ENCODE measurements at regions of chr11 and their contacts with region 1.

Region 1: DNA sequence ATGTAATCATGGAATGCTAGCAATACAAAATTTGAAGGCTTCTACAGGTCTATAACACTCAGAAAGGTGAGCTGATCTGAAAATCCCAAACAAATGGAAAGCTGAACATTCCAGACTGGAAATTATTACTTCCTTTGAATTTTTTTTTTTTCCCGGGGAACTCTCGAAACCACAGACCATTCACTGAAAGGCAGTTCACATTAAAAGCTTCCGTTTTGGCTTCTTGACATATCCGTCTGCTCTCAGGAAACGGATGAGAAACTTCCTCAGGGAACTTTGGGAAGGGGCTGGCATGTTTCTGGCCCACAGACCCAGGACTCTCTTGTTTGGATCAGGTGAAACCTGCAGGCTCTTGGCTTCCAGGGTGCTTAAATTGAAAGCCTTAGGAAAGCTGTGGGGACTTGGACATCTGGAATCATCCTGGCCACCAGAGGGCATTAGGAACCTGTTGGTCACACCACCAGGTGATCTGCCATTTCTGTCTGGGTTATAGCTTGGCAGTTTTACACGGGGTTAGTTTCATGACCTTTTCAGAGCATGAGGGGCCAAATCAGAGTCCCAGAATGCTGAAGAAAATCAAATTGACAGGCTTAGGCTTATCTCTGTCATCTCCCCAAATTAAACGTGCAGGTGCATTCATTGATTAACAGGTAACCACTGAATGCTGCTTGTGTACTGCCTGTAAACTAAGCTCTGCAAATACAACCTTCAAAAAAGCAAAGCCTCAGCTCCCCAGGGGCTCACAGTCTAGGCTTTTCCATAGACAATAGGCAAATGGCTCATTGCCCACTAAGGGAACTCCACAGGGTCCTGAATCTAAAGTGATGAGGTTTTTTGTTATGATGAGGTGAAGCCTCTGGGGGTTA is 22.7 kb upstream of the GRAMD1B start:
- DNase-seq: no peak
- ATAC-seq: peak; percentile 51

Region 2: GRCh38 chr11:123301696-123302400 is 105.5 kb before region 1 on chr11:
- intact Hi-C with region 1: loop called (anchors 1 kb)
- DNase-seq: peak; percentile 82
- ATAC-seq: peak; percentile 84

Region 3: DNA sequence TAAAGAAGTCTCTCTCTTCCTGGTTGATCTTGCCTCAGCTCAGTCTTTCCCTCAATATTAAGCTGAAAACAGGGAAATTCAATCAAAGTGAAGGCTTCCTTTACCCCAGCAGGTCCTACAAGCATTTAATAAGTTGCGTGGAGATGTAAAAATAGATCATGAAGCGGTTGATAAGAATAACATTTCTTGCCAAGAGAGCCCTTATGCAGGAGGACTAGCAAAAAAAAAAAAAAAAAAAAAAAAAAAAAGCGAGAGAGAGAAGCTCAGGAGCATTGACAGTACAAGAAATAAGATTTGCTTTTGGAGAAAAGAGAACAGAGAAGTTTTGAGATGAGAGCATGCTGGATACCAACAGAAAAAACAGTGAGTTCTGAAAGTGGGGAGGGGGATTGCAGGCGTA is 100.1 kb before region 1 on chr11:
- intact Hi-C with region 1: loop called (anchors 1 kb)
- DNase-seq: no peak
- ATAC-seq: peak; percentile 4

Region 4: GRCh38 chr11:123314972-123315371 is 92.4 kb before region 1 on chr11:
- intact Hi-C with region 1: loop called (anchors 2 kb)
- DNase-seq: no peak
- ATAC-seq: peak; percentile 96

Region 5: DNA sequence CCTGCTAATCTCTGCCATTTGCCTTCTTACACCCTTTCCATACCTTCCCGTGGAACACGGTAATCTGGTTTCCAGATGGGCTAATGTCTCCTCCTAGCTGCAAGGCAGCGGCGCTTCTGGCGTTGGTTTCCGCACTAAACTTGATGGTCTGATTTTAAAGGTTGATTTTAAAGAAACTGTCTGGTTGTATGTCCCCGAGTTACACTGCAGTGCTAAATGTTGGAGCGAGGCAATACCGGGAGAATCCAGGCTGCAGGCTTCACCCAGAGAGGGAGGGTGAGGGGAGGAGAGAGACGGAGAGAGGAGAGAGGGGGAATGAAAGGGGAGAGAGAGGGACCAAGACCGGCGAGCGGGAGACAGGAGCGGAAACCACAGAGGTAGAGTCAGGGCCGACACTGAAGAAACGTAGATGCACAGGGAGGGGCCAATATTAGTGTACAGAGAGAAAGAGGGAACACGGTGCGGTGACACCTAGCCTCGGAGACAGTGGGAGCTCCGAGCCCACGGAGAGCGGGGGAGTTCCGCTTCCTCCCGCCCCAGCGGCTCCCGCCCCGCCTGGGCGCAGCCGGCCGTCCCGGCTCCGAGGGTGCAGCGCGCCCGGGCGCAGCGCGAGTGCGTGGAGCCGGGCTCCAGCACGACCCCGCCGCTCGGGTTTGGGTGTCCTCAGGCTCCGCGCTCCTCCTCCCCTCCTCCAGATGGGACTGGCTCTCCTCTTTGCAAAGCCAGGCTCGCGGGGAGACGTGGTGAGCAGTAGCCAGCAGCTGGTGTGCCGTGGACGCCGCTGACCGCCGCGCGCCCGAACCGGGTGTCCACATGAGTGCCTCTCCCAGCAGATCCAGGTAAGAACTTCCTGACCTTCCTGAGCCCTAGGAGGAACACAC is 49.2 kb before region 1 on chr11:
- intact Hi-C with region 1: loop called (anchors 1 kb)
- DNase-seq: peak; percentile 65
- ATAC-seq: peak; percentile 60

Region 6: DNA sequence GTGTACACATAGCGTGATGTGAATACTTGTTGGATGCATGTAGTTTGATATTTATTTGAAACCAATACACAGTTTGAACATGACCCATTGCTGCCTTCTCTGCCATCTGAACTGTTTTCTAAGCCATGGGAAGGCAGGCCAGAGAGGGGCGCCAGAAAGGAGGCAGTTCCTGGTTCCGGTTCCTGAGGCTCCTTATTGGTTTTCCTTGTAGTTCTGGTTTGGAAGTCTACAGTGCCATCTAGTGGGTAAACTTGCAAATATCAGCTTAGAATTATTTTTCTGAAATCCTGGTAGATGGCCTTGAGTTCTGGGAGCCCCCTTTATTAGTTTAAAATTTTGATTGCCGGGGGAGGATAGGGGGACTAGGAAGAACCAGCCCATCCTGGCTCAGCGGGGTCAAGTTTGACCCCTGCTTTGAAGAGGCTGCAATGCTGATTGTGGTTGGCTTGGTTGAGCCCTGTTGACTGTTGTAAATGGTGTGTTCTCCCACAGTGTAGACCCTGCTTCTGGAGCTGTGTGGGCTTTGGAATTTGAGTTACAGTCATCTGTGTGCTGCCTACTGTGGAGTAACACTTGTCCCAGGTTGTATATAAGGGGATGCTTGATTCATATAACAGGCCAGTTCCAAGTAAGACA is 71.1 kb after region 1 on chr11:
- intact Hi-C with region 1: loop called (anchors 1 kb)
- DNase-seq: no peak
- ATAC-seq: peak; percentile 64